Activated naive CD4-positive, alpha-beta T cell treated with anti-CD3 and anti-CD28 coated beads for 36 hours (primary cell): ENCODE measurements at regions of chr4 and their contacts with region 1.

Region 1: DNA sequence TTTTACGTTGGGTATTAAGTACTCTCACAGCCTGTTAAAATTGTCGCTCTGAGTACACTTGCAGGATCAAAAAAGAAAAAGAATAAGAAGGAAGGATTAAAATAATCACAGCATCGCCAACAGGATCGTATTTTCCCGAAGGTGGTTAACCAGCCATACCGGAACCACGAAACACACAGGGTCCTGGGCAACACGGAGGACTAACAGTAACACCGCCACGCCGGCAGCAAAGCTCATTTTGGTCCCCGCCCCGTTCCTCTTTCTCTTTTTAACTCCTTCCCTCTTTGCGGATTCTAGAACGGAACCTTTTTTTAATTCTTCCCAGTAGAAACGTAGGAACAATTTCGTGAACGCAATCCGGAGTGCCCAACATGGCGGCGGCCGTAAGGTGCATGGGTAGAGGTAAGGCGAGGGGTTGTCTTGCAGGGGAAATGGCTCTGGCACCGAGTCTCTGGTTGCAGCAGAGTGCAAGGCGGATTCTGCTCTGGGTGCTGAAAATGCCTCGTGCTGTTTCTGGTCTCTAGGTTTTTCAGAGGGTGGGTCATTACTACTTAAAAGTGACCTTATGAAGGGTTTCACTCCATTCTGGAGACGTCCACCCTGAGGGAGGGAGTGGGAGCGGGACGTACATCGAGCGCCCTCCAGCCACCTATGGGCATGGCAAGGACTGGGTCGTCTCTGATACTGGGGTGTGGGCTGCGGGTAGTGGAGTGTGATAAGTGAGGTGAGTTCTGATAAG is at the start of gene MRPL1:
- DNase-seq: peak; percentile 91
- H3K4me3 Mint-ChIP-seq: peak within 1 kb of the TSS; percentile 91
- H3K27ac Mint-ChIP-seq: peak within 1 kb of the TSS; percentile 100
- H3K4me1 Mint-ChIP-seq: peaks cover 58% of the 10 kb centered on the region
- H3K27me3 Mint-ChIP-seq: peaks cover 4% of the 10 kb centered on the region
- total RNA-seq, gene MRPL1: 37.5 to 39.8 TPM

Region 2: DNA sequence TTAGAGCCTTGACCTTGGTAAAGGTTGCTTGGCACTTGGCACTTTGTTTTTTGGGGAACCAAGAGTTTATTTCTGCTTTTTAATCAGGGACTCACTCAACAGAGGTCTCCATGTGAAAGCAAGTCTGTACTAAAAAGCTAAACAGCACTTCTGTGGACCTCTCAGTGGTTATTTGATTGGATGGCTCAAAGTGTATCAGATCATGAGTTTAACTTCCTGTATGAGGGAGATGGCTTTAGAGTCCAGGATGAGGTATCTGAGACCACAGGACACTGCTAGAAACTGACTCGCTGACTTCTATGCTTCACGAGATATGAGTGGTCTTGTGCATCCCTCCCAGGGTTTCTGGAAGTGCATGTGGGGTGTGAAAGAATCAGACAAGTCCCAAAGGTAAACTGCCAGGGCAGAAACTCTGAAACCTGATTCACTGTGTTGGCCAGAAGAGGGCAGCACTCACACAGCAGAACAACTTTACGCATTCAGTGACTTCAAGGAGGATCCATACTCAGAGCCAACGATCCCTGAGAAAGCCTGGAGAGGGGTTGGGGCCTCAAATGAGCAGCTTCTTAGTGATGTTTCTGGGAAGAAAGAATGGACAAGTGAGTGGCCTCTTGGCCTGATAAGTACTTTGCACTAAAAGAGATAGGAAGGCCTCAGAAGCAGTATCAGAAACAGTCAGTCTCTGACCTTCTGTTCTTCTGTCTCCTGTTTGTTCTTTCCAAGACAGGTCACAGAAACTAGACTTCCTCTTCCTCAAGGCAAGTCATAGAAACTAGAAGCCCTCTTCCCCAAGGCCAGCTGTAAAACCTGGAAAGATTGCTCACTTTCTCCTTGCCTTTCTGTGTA is 477.3 kb before region 1 on chr4:
- CTCF ChIA-PET with region 1: no interaction called
- intact Hi-C with region 1: loop called (anchors 2 kb)
- DNase-seq: peak; percentile 78
- H3K4me3 Mint-ChIP-seq: no peak overlapping the region
- H3K27ac Mint-ChIP-seq: no peak overlapping the region
- H3K4me1 Mint-ChIP-seq: no peaks in the 10 kb centered on the region
- H3K27me3 Mint-ChIP-seq: no peaks in the 10 kb centered on the region

Region 3: GRCh38 chr4:77586951-77587383 is 275.7 kb before region 1 on chr4:
- CTCF ChIA-PET with region 1: no interaction called
- intact Hi-C with region 1: loop called (anchors 1 kb)
- DNase-seq: peak; percentile 87
- H3K4me3 Mint-ChIP-seq: peak overlapping the region; percentile 17
- H3K27ac Mint-ChIP-seq: peak overlapping the region; percentile 80
- H3K4me1 Mint-ChIP-seq: peaks cover 49% of the 10 kb centered on the region
- H3K27me3 Mint-ChIP-seq: peaks cover 15% of the 10 kb centered on the region

Region 4: GRCh38 chr4:77629885-77630284 is 232.8 kb before region 1 on chr4:
- CTCF ChIA-PET with region 1: interaction called, 3 read pairs
- intact Hi-C with region 1: loop called (anchors 1 kb)
- DNase-seq: peak; percentile 37
- H3K4me3 Mint-ChIP-seq: no peak overlapping the region
- H3K27ac Mint-ChIP-seq: no peak overlapping the region
- H3K4me1 Mint-ChIP-seq: peaks cover 16% of the 10 kb centered on the region
- H3K27me3 Mint-ChIP-seq: no peaks in the 10 kb centered on the region

Region 5: DNA sequence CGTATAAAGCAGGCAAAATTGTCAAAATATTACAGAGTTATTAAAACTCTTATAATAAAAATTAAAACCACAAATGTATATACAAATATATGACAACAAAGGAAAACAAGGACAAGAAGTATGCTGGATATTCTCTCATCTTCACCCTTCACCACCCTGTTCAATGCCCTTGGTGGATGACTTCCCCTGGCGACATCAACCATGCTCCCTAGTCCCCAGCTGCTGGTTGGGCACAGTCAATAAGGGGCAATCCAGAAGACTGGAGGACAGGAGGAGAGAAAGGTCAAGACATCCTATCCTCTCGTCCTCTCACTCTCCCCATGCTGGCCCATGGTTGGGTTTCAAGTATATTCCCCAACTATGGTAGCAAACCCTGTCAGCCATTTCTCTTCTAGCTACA is 185.8 kb before region 1 on chr4:
- CTCF ChIA-PET with region 1: no interaction called
- intact Hi-C with region 1: no loop called
- DNase-seq: no peak
- H3K4me3 Mint-ChIP-seq: no peak overlapping the region
- H3K27ac Mint-ChIP-seq: no peak overlapping the region
- H3K4me1 Mint-ChIP-seq: no peaks in the 10 kb centered on the region
- H3K27me3 Mint-ChIP-seq: peaks cover 2% of the 10 kb centered on the region

Region 6: GRCh38 chr4:77800483-77801259 is 62.0 kb before region 1 on chr4:
- CTCF ChIA-PET with region 1: interaction called, 3 read pairs
- intact Hi-C with region 1: loop called (anchors 1 kb)
- DNase-seq: no peak
- H3K4me3 Mint-ChIP-seq: peak overlapping the region; percentile 70
- H3K27ac Mint-ChIP-seq: peak overlapping the region; percentile 88
- H3K4me1 Mint-ChIP-seq: peaks cover 81% of the 10 kb centered on the region
- H3K27me3 Mint-ChIP-seq: no peaks in the 10 kb centered on the region

Region 7: DNA sequence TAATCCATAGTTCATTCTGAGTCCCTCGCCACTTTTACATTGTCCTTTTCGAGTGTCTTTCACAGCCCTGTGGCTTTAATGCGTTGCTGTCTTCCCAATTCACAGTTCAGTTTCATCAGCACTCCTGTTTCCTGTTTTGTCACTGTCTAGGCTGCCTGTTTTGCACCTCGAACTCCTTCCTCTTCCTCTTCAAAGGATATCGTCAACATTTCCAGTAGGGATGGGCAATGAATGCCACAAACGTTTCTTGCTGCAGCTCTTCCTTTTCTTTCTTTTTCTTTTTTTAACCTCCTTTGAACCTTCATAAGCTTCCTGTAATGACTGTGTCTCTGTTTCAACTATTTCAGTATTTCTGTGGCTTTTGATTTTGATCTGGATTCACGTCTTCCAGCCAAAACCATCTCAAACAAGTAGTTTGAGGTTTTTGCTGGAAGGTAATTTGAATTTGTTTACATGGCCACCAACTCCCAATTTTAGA is 794.4 kb after region 1 on chr4:
- CTCF ChIA-PET with region 1: no interaction called
- intact Hi-C with region 1: loop called (anchors 5 kb)
- DNase-seq: peak; percentile 45
- H3K4me3 Mint-ChIP-seq: peak overlapping the region; percentile 32
- H3K27ac Mint-ChIP-seq: peak overlapping the region; percentile 84
- H3K4me1 Mint-ChIP-seq: peaks cover 45% of the 10 kb centered on the region
- H3K27me3 Mint-ChIP-seq: no peaks in the 10 kb centered on the region